ENCODE measurements at regions of chr5 and their contacts with region 1.

Region 1: DNA sequence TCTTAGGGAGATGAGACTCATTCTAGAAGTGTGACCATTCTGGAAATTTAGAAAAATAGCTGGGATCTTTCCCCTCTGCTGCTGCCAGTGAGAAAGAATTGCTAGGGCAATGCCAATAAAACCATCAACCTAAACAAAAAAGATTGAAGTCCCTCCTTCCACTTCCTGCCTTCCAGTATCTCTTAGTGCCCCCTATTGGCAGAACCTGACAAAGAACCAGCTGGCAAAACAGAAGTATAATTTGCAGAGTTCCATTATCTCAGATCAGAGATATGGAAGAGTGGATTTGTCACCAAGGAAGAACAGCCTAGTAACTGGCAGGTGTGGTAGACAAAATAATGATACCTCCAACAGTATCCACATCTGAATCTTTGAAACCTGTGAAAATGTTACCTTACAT is 13.8 kb upstream of the PLCXD3 start:
- DNase-seq: no peak
- ATAC-seq: no peak
- H3K4me3 Mint-ChIP-seq: no peak overlapping the region
- H3K27ac Mint-ChIP-seq: no peak overlapping the region
- H3K4me1 Mint-ChIP-seq: no peaks in the 10 kb centered on the region
- H3K27me3 Mint-ChIP-seq: peaks cover 2% of the 10 kb centered on the region
- CTCF ChIP-seq: no peak

Region 2: GRCh38 chr5:41346609-41347008 is 177.6 kb before region 1 on chr5:
- CTCF ChIA-PET with region 1: no interaction called
- POLR2A ChIA-PET with region 1: no interaction called
- intact Hi-C with region 1: loop called (anchors 5 kb)
- DNase-seq: no peak
- ATAC-seq: no peak
- H3K4me3 Mint-ChIP-seq: no peak overlapping the region
- H3K27ac Mint-ChIP-seq: no peak overlapping the region
- H3K4me1 Mint-ChIP-seq: no peaks in the 10 kb centered on the region
- H3K27me3 Mint-ChIP-seq: no peaks in the 10 kb centered on the region
- CTCF ChIP-seq: no peak

Region 3: DNA sequence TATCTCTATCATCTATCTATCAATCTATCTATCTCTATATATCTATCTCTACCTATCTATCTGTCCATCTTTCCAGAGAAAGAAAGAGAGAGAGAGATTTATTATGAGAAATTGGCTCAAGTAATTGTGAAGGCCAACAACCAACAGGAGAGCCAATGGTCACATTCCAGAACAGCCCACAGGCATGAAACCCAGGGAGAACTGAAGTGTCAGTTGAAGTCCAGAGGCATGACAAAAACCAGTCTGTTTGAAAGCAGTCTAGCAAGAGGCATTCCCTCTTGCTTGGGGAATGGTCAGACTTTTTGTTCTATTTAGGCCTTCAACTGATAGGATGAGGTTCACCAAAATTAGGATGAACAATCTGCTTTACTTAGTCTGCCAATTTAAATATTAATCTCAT is 73.8 kb after region 1 on chr5:
- CTCF ChIA-PET with region 1: no interaction called
- POLR2A ChIA-PET with region 1: no interaction called
- intact Hi-C with region 1: no loop called
- DNase-seq: no peak
- ATAC-seq: no peak
- H3K4me3 Mint-ChIP-seq: no peak overlapping the region
- H3K27ac Mint-ChIP-seq: no peak overlapping the region
- H3K4me1 Mint-ChIP-seq: no peaks in the 10 kb centered on the region
- H3K27me3 Mint-ChIP-seq: no peaks in the 10 kb centered on the region
- CTCF ChIP-seq: no peak

Region 4: GRCh38 chr5:41707853-41708603 is 183.9 kb after region 1 on chr5:
- CTCF ChIA-PET with region 1: no interaction called
- POLR2A ChIA-PET with region 1: no interaction called
- intact Hi-C with region 1: no loop called
- DNase-seq: no peak
- ATAC-seq: no peak
- H3K4me3 Mint-ChIP-seq: no peak overlapping the region
- H3K27ac Mint-ChIP-seq: no peak overlapping the region
- H3K4me1 Mint-ChIP-seq: no peaks in the 10 kb centered on the region
- H3K27me3 Mint-ChIP-seq: no peaks in the 10 kb centered on the region
- CTCF ChIP-seq: no peak